ENCODE measurements at regions of chr20 and their contacts with region 1.

Region 1: DNA sequence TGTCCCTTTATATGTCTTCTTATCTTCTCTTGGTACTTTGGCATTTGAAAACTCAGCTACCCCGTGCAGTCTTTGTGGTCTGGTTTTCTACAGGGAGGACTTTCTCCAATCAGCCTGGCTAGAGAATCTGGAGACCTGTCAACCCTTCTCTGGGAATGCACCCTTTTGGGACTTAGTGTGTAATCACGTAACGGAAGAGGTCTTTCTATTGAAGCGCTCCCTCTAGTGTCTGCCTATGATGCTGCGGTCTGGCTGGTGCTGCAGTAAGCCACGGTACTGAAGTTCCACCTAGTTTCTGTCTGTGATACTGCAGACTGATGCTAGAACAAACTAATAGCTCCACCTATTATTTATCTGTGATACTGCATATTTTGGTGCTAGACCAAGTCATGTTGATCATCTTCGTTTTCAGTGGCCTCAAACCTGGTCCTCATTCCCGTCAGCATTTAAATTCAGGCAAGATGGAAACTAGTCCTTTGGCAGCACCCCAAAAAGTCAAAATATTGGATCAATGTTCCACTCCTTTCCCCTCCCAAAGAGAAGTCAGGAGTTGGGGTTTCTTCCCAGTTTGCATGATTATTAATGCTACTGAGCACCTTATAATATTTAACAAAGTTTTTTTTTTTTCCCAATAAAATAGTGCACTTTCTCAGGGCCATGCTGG is 12.5 kb upstream of the SIRPB2 start:
- DNase-seq: peak; percentile 76
- ATAC-seq: peak; percentile 100
- H3K4me3 ChIP-seq: no peak overlapping the region
- H3K27ac ChIP-seq: no peak overlapping the region
- H3K4me1 ChIP-seq: no peaks in the 10 kb centered on the region
- H3K27me3 ChIP-seq: peaks cover 0 to 7% of the 10 kb centered on the region in 2 experiments; a peak in 1 of 4 replicates
- CTCF ChIP-seq: peak; percentile 98 to 100 (median 100); a peak in 5 of 6 replicates
- EP300 ChIP-seq: no peak
- POLR2A ChIP-seq: no peak
- RAD21 ChIP-seq: peak; percentile 86

Region 2: GRCh38 chr20:1325173-1326030 is 178.3 kb before region 1 on chr20:
- CTCF ChIA-PET with region 1: interaction called, 10 read pairs
- POLR2A ChIA-PET with region 1: no interaction called
- RAD21 ChIA-PET with region 1: interaction called, 3 read pairs
- SMC1A ChIA-PET with region 1: no interaction called
- in situ Hi-C with region 1: no loop called
- intact Hi-C with region 1: no loop called
- DNase-seq: peak; percentile 88
- ATAC-seq: peak; percentile 89
- H3K4me3 ChIP-seq: peak overlapping the region; percentile 90
- H3K27ac ChIP-seq: peak overlapping the region; percentile 94
- H3K4me1 ChIP-seq: peaks cover 34% of the 10 kb centered on the region
- H3K27me3 ChIP-seq: no peaks in the 10 kb centered on the region
- CTCF ChIP-seq: no peak
- EP300 ChIP-seq: peak in 1 of 2 experiments; percentile 74; a peak in 1 of 4 replicates
- POLR2A ChIP-seq: peak; percentile 97
- RAD21 ChIP-seq: no peak

Region 3: DNA sequence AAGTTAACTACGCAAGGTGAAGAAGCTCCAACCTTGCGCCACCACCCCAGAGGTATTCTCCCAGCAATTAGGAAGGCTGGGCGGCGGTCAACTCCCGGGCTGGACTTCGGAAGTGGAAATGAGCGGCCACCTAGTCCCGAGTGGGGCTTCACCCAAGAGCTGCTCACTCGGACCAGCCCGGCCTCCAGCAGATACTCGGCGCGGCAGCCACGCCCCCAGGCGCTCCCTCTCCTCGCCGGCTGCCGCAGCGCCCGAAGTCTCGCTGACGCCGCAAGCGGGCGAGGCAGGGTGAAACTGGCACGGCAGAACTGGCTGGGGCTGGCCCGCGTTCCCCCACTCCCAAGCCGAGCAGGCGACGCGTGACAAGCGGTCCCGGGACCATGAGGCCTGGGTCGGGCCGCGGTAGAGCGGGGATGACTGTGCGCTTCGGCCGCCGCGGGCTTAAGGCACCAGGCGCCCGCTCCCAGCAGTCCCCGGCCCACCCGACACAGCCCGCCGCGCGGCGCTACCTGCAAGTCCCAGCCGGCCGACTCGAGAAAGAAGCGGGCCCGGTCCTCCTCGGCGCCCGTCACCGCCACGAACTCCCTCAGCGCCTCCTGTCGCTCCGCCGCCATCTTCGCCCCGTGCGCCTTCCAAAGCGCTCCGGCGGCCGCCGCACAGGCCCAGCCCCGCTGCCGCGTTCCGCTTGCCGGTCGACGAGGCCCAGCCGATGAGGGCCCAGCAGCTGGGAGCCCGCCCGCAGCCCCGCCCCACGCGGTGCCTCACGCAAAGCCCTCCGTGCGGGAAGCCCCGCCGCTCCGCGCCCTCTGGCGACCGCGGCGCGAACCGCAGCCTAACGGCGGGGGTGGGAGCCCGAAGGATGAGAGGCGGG is 37.2 kb before region 1 on chr20 and contains the start of gene NSFL1C:
- CTCF ChIA-PET with region 1: interaction called, 42 read pairs
- POLR2A ChIA-PET with region 1: interaction called, 3 read pairs
- RAD21 ChIA-PET with region 1: interaction called, 20 read pairs
- SMC1A ChIA-PET with region 1: interaction called, 24 read pairs
- in situ Hi-C with region 1: no loop called
- intact Hi-C with region 1: loop called (anchors 1 kb)
- DNase-seq: peak; percentile 59
- ATAC-seq: peak; percentile 91
- H3K4me3 ChIP-seq: peak within 1 kb of the TSS; percentile 93
- H3K27ac ChIP-seq: peak within 1 kb of the TSS; percentile 27
- H3K4me1 ChIP-seq: peaks cover 25% of the 10 kb centered on the region
- H3K27me3 ChIP-seq: no peaks in the 10 kb centered on the region; a peak in 1 of 4 replicates
- CTCF ChIP-seq: peak; percentile 84 to 98 (median 91)
- EP300 ChIP-seq: no peak
- POLR2A ChIP-seq: peak; percentile 94
- RAD21 ChIP-seq: peak; percentile 36; the same call in 1 of the 2 replicates
- polyA plus RNA-seq, gene NSFL1C: 27.7 to 29.4 TPM

Region 4: DNA sequence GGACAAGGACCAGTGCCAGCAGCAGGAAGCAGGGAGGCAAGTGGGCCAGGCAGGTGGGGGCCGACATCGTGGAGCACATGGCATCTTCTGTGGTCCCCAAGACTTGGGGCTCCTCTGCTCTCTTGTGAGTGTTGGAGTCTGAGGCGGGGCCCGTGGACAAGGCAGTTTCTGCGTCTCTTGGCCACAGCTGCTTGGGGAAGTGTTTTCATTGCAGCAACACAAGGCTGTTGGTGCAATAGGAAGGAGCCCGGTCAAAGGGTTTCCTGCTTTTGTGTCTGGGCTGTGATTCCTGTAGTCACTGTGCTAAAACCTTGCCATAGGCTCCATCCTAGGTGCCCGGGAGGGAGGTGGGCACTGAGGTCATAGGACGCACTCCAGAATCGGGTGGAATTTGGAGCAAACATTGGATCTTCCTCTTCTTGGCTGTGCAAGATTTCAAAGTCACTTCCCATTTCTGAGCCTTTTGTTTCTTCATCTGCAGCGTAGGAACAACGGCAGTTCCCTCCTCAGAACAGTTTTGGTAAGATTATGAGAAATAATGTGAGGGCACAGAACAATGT is 12.3 kb before region 1 on chr20 and contains the start of gene SIRPB2:
- CTCF ChIA-PET with region 1: interaction called, 28 read pairs
- POLR2A ChIA-PET with region 1: no interaction called
- RAD21 ChIA-PET with region 1: interaction called, 5 read pairs
- SMC1A ChIA-PET with region 1: interaction called, 11 read pairs
- in situ Hi-C with region 1: no loop called
- intact Hi-C with region 1: no loop called
- DNase-seq: no peak
- ATAC-seq: no peak
- H3K4me3 ChIP-seq: no peak within 1 kb of the TSS
- H3K27ac ChIP-seq: no peak within 1 kb of the TSS
- H3K4me1 ChIP-seq: no peaks in the 10 kb centered on the region; the same call in 1 of the 2 replicates
- H3K27me3 ChIP-seq: peaks cover 0 to 2% of the 10 kb centered on the region in 2 experiments; a peak in 1 of 4 replicates
- CTCF ChIP-seq: no peak
- EP300 ChIP-seq: no peak
- POLR2A ChIP-seq: no peak
- RAD21 ChIP-seq: no peak
- polyA plus RNA-seq, gene SIRPB2: not detected

Region 5: DNA sequence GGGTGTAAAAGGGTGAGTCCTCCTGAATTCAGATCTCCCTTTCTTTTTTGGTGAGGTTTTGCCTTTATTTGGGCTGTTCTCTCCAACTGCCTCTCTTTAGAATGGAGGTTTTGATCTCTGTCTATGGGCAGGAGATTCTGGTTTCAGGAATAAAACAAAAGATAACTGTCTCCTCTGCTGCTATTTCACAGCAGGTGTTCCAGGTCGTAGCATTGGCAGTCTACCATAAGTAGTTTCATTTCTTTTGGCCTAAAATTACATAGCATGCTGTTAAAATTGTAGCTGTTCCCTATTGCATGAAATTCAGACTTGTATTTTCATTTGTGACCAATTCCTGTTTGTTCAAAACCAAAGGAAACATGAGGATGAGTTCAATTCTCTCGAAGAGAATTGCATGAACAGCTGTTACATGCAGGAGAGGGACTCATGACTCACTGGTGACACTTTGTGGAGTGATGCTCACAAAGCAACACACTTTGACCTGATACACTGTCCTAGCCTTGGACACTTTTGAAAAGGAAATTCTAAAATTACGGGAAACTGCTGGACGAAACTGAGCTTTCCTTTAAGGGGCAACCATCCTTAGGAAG is 230.7 kb after region 1 on chr20:
- CTCF ChIA-PET with region 1: interaction called, 53 read pairs
- POLR2A ChIA-PET with region 1: no interaction called
- RAD21 ChIA-PET with region 1: interaction called, 44 read pairs
- SMC1A ChIA-PET with region 1: interaction called, 138 read pairs
- in situ Hi-C with region 1: no loop called
- intact Hi-C with region 1: no loop called
- DNase-seq: no peak
- ATAC-seq: peak; percentile 91
- H3K4me3 ChIP-seq: no peak overlapping the region
- H3K27ac ChIP-seq: no peak overlapping the region; the same call in 1 of the 2 replicates
- H3K4me1 ChIP-seq: peaks cover 16% of the 10 kb centered on the region
- H3K27me3 ChIP-seq: no peaks in the 10 kb centered on the region
- CTCF ChIP-seq: peak; percentile 48 to 69 (median 60); a peak in 5 of 6 replicates
- EP300 ChIP-seq: no peak
- POLR2A ChIP-seq: no peak
- RAD21 ChIP-seq: peak; percentile 97